ENCODE measurements at regions of chr5 and their contacts with region 1.

Region 1: GRCh38 chr5:5886812-5887486 is 464.5 kb downstream of the ICE1 start:
- DNase-seq: peak in 2 of 5 donors; percentile 25 to 65
- ATAC-seq: peak in 3 of 4 donors; percentile 46 to 65 (median 55)
- H3K4me3 ChIP-seq: no peak overlapping the region
- H3K27ac ChIP-seq: no peak overlapping the region
- H3K4me1 ChIP-seq: peaks cover 0 to 5% (median 0%) of the 10 kb centered on the region in 12 donors
- H3K27me3 ChIP-seq: peaks cover 0 to 5% (median 0%) of the 10 kb centered on the region in 9 donors
- CTCF ChIP-seq: peak; percentile 30 to 63 (median 48)
- POLR2A ChIP-seq: no peak

Region 2: GRCh38 chr5:5505815-5506214 is 381.1 kb before region 1 on chr5:
- intact Hi-C with region 1: loop called in 1 of 10 experiments (anchors 10 kb)
- DNase-seq: no peak
- ATAC-seq: no peak
- H3K4me3 ChIP-seq: no peak overlapping the region
- H3K27ac ChIP-seq: no peak overlapping the region
- H3K4me1 ChIP-seq: no peaks in the 10 kb centered on the region
- H3K27me3 ChIP-seq: peaks cover 0 to 4% (median 0%) of the 10 kb centered on the region in 9 donors
- CTCF ChIP-seq: no peak
- POLR2A ChIP-seq: no peak

Region 3: GRCh38 chr5:6576861-6577501 is 690.0 kb after region 1 on chr5:
- intact Hi-C with region 1: loop called in 2 of 10 experiments (anchors 10 kb)
- DNase-seq: no peak
- ATAC-seq: peak in 2 of 4 donors; percentile 45 to 53
- H3K4me3 ChIP-seq: no peak overlapping the region
- H3K27ac ChIP-seq: no peak overlapping the region
- H3K4me1 ChIP-seq: peaks cover 0 to 16% (median 4%) of the 10 kb centered on the region in 12 donors
- H3K27me3 ChIP-seq: peaks cover 0 to 7% (median 0%) of the 10 kb centered on the region in 9 donors
- CTCF ChIP-seq: peak; percentile 26 to 63 (median 49)
- POLR2A ChIP-seq: no peak

Region 4: DNA sequence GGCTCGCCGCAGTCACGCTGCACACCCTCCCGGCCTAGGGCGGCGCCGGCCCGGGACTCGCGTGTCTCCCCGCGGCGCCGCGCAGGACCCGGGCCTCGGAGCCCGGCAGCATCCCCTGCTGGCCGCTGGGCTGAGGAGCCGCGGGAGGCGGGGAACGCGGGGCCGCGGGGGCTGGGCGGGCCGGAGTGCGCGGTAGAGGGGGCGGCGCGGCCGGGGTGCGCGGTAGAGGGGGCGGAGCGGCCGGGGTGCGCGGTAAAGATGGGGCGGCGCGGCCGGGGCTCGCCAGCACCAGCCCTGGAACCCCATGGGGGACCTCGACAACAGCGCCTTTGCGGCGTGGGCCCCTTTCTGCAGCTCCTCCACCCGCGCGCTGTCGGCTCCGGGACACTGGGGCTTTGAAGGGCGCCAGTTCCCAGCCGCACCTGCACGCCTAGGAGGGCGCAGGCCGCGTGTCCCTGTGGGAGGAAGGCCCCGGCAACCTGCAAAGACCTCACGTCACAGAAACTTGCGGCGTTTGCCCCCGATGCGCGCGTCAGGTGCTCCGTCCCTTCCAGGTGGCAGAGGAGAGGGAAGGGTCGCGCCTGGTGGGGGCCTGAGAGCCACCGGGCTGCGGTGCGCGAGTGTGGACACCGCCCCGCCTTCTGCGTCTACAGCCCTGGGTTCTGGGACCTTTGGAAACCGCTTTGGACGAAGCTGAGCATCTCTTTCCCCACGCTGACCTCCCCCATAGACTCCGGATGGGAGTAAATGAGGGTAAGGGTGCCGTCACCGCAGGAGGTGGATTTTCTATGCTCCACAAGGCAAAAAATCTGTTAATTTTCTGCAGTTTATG is 696.3 kb after region 1 on chr5:
- intact Hi-C with region 1: loop called in 2 of 10 experiments (anchors 10 kb)
- DNase-seq: peak in 4 of 5 donors; percentile 39 to 67 (median 53)
- ATAC-seq: peak; percentile 48 to 96 (median 84)
- H3K4me3 ChIP-seq: peak overlapping the region in 11 of 12 donors; percentile 30 to 61 (median 48)
- H3K27ac ChIP-seq: peak overlapping the region in 1 of 12 donors; percentile 2
- H3K4me1 ChIP-seq: peaks cover 0 to 15% (median 2%) of the 10 kb centered on the region in 12 donors
- H3K27me3 ChIP-seq: peaks cover 0 to 30% (median 0%) of the 10 kb centered on the region in 9 donors
- CTCF ChIP-seq: peak in 11 of 12 donors; percentile 17 to 65 (median 42)
- POLR2A ChIP-seq: no peak